CD4-positive, alpha-beta memory T cell (primary cell): ENCODE measurements at regions of chr10 and their contacts with region 1.

Region 1: GRCh38 chr10:33125522-33126517 is 167.8 kb upstream of the ITGB1 start:
- DNase-seq: peak; percentile 58 to 72 (median 66)
- H3K4me3 ChIP-seq: no peak overlapping the region
- H3K4me3 Mint-ChIP-seq: peak overlapping the region; percentile 37 to 81 (median 65)
- H3K27ac ChIP-seq: peak overlapping the region; percentile 72
- H3K27ac Mint-ChIP-seq: peak overlapping the region; percentile 91 to 98 (median 97)
- H3K4me1 ChIP-seq: peaks cover 93% of the 10 kb centered on the region
- H3K4me1 Mint-ChIP-seq: peaks cover 61 to 98% (median 84%) of the 10 kb centered on the region in 4 donors
- H3K27me3 ChIP-seq: no peaks in the 10 kb centered on the region
- H3K27me3 Mint-ChIP-seq: no peaks in the 10 kb centered on the region

Region 2: GRCh38 chr10:33032654-33033151 is 93.1 kb before region 1 on chr10:
- CTCF ChIA-PET with region 1: interaction called, 4 read pairs
- POLR2A ChIA-PET with region 1: interaction called, 14 read pairs
- intact Hi-C with region 1: no loop called
- DNase-seq: no peak
- H3K4me3 ChIP-seq: no peak overlapping the region
- H3K4me3 Mint-ChIP-seq: peak overlapping the region in 5 of 8 donors; percentile 6 to 50 (median 22)
- H3K27ac ChIP-seq: no peak overlapping the region
- H3K27ac Mint-ChIP-seq: peak overlapping the region; percentile 43 to 90 (median 81)
- H3K4me1 ChIP-seq: peaks cover 57% of the 10 kb centered on the region
- H3K4me1 Mint-ChIP-seq: peaks cover 38 to 55% (median 47%) of the 10 kb centered on the region in 4 donors
- H3K27me3 ChIP-seq: no peaks in the 10 kb centered on the region
- H3K27me3 Mint-ChIP-seq: no peaks in the 10 kb centered on the region

Region 3: GRCh38 chr10:33139181-33139646 is 13.4 kb after region 1 on chr10:
- CTCF ChIA-PET with region 1: interaction called, 346 read pairs
- POLR2A ChIA-PET with region 1: interaction called, 2,213 read pairs
- intact Hi-C with region 1: loop called (anchors 1 kb)
- DNase-seq: peak; percentile 94 to 97 (median 95)
- H3K4me3 ChIP-seq: peak overlapping the region; percentile 10 to 54
- H3K4me3 Mint-ChIP-seq: peak overlapping the region; percentile 57 to 81 (median 75)
- H3K27ac ChIP-seq: peak overlapping the region; percentile 84
- H3K27ac Mint-ChIP-seq: peak overlapping the region; percentile 98 to 100 (median 100)
- H3K4me1 ChIP-seq: peaks cover 92% of the 10 kb centered on the region
- H3K4me1 Mint-ChIP-seq: peaks cover 63 to 93% (median 80%) of the 10 kb centered on the region in 4 donors
- H3K27me3 ChIP-seq: no peaks in the 10 kb centered on the region
- H3K27me3 Mint-ChIP-seq: no peaks in the 10 kb centered on the region

Region 4: GRCh38 chr10:33386971-33387370 is 261.2 kb after region 1 on chr10:
- CTCF ChIA-PET with region 1: no interaction called
- POLR2A ChIA-PET with region 1: no interaction called
- intact Hi-C with region 1: no loop called
- DNase-seq: no peak
- H3K4me3 ChIP-seq: no peak overlapping the region
- H3K4me3 Mint-ChIP-seq: no peak overlapping the region
- H3K27ac ChIP-seq: no peak overlapping the region
- H3K27ac Mint-ChIP-seq: no peak overlapping the region
- H3K4me1 ChIP-seq: no peaks in the 10 kb centered on the region
- H3K4me1 Mint-ChIP-seq: no peaks in the 10 kb centered on the region
- H3K27me3 ChIP-seq: no peaks in the 10 kb centered on the region
- H3K27me3 Mint-ChIP-seq: peaks cover 19 to 20% of the 10 kb centered on the region in 2 donors